ENCODE measurements at regions of chr2 and their contacts with region 1.

Region 1: GRCh38 chr2:69581774-69582581 is 61.6 kb downstream of the AAK1 start:
- DNase-seq: no peak

Region 2: GRCh38 chr2:69601179-69601612 is 19.2 kb after region 1 on chr2:
- intact Hi-C with region 1: loop called in 1 of 2 experiments (anchors 1 kb)
- DNase-seq: no peak

Region 3: DNA sequence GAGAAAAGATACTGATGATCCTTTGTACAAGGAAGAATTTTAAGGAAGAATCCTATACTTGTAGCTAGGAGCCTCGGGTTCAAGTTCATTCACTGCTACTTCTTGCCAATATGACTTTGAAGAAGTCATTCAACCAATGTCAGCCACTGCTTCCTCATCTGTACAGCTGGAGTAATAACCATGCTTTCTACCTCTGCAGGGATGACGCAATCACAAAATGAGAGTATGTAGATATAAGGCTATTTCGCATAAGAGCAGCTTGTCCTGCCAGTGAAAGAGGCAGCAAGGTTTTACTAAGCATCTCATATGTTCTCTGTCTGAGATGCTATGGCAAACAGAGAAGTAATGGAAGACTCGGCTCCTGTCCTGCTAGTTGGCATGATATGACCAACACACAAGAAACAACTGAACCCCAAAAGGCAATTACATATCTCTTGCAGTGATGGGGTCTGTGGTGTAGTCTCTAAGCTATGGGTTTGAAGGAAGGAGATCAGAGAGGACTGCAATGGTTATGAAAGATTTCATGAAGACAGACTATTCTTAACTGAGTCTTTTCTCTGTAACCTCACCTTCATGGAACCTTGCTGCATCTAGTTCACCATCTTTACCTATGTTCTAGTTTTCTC is 52.3 kb after region 1 on chr2:
- intact Hi-C with region 1: loop called in 1 of 2 experiments (anchors 10 kb)
- DNase-seq: no peak

Measured in posterior vena cava (tissue), 2 donors.